ENCODE measurements at regions of chr19 and their contacts with region 1.

Region 1: GRCh38 chr19:6460101-6460853 is 685 bp upstream of the SLC25A23 start:
- DNase-seq: peak; percentile 99
- ATAC-seq: peak; percentile 83
- H3K4me3 Mint-ChIP-seq: peak overlapping the region; percentile 78
- H3K27ac Mint-ChIP-seq: peak overlapping the region; percentile 82
- H3K4me1 Mint-ChIP-seq: peaks cover 18% of the 10 kb centered on the region
- H3K27me3 Mint-ChIP-seq: no peaks in the 10 kb centered on the region

Region 2: GRCh38 chr19:6110360-6110977 is 349.8 kb before region 1 on chr19 and contains the start of gene RFX2:
- CTCF ChIA-PET with region 1: no interaction called
- POLR2A ChIA-PET with region 1: no interaction called
- intact Hi-C with region 1: loop called in 1 of 2 experiments (anchors 1 kb)
- DNase-seq: peak; percentile 100
- ATAC-seq: peak; percentile 98
- H3K4me3 Mint-ChIP-seq: peak within 1 kb of the TSS; percentile 76
- H3K27ac Mint-ChIP-seq: peak within 1 kb of the TSS; percentile 60
- H3K4me1 Mint-ChIP-seq: peaks cover 23% of the 10 kb centered on the region
- H3K27me3 Mint-ChIP-seq: peaks cover 16% of the 10 kb centered on the region
- total RNA-seq, gene RFX2: 8.6 to 8.9 TPM

Region 3: GRCh38 chr19:6362027-6362350 is 98.3 kb before region 1 on chr19:
- CTCF ChIA-PET with region 1: no interaction called
- POLR2A ChIA-PET with region 1: no interaction called
- intact Hi-C with region 1: loop called in 1 of 2 experiments (anchors 1 kb)
- DNase-seq: no peak
- ATAC-seq: peak; percentile 1
- H3K4me3 Mint-ChIP-seq: peak overlapping the region; percentile 85
- H3K27ac Mint-ChIP-seq: peak overlapping the region; percentile 91
- H3K4me1 Mint-ChIP-seq: peaks cover 16% of the 10 kb centered on the region
- H3K27me3 Mint-ChIP-seq: no peaks in the 10 kb centered on the region

Region 4: DNA sequence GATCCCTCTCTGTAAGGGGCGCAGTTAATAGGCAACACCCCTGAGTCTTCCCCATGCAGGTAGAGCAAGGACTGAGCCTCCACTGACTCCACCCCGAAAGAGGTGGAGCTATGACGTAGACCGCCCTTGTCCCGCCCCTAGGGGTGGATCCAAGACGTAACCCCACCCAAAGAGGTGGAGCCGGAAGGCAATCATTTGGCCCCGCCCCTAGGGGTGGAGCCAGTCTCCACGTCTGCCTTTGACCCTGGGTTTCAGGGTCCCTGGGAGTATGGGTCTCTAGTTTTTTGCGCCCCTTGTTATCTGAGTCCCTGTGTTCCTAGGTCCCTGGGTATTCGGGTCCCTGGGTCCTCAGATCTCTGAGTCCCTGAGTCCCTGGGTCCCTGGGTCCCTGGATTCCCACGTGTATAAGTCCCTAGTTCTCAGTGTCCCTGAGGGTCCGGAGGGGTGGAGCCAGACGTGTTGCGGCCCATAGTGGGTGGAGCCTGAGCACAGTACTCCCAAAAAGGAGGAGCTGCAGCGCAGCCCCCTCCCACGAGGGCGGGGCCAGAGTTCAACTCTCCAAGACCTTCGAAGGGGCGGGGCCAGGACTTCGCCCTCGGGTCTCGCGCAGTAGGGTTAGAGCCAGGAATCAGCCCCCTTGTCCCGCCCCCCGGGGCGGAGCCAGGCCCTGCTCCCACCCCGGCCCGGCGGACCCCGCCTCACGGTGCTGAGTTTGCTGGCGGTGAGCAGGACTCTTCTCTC is 16.0 kb after region 1 on chr19:
- CTCF ChIA-PET with region 1: no interaction called
- POLR2A ChIA-PET with region 1: no interaction called
- intact Hi-C with region 1: loop called in 1 of 2 experiments (anchors 1 kb)
- DNase-seq: peak; percentile 84
- ATAC-seq: peak; percentile 88
- H3K4me3 Mint-ChIP-seq: no peak overlapping the region
- H3K27ac Mint-ChIP-seq: no peak overlapping the region
- H3K4me1 Mint-ChIP-seq: peaks cover 16% of the 10 kb centered on the region
- H3K27me3 Mint-ChIP-seq: no peaks in the 10 kb centered on the region

Region 5: DNA sequence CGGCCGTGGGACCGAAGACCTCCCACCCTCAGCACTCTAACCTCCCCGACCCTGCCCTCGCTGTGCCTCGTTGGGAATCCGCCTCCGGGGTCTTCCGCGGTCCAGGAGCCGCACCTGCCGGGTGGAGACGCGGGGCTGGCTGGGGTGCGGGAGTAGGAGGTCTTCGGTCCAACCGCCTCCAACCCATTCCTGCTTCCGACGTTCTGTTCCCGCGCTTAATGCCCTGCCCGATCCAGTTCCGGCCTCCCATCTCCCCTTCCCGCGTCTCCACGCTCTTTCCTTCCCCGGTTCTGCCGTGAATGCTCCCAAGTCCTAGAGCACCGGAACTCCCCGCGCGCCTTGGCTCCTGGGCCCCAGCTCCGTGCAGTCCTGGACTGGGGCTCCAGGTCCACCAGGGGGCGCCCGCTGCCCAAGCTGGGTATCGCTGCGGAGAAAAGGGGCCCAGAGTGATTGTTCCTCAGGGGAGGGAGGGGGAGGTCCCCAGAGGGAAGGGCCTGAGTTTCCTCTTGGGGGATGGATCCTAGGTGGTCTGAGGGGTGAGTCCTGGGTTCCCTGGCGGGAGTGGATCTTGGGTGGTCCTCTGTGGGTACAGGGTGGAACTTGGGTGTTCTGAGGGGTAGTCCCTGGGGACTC is 56.5 kb after region 1 on chr19:
- CTCF ChIA-PET with region 1: no interaction called
- POLR2A ChIA-PET with region 1: no interaction called
- intact Hi-C with region 1: loop called in 1 of 2 experiments (anchors 1 kb)
- DNase-seq: peak; percentile 97
- ATAC-seq: peak; percentile 86
- H3K4me3 Mint-ChIP-seq: peak overlapping the region; percentile 79
- H3K27ac Mint-ChIP-seq: peak overlapping the region; percentile 92
- H3K4me1 Mint-ChIP-seq: peaks cover 34% of the 10 kb centered on the region
- H3K27me3 Mint-ChIP-seq: peaks cover 2% of the 10 kb centered on the region

Region 6: GRCh38 chr19:6674868-6675305 is 214.6 kb after region 1 on chr19:
- CTCF ChIA-PET with region 1: no interaction called
- POLR2A ChIA-PET with region 1: no interaction called
- intact Hi-C with region 1: loop called in 1 of 2 experiments (anchors 2 kb)
- DNase-seq: peak; percentile 97
- ATAC-seq: peak; percentile 61
- H3K4me3 Mint-ChIP-seq: peak overlapping the region; percentile 57
- H3K27ac Mint-ChIP-seq: peak overlapping the region; percentile 93
- H3K4me1 Mint-ChIP-seq: peaks cover 75% of the 10 kb centered on the region
- H3K27me3 Mint-ChIP-seq: no peaks in the 10 kb centered on the region

Region 7: GRCh38 chr19:6862673-6863078 is 402.4 kb after region 1 on chr19:
- CTCF ChIA-PET with region 1: no interaction called
- POLR2A ChIA-PET with region 1: no interaction called
- intact Hi-C with region 1: loop called in 1 of 2 experiments (anchors 1 kb)
- DNase-seq: peak; percentile 96
- ATAC-seq: peak; percentile 83
- H3K4me3 Mint-ChIP-seq: peak overlapping the region; percentile 72
- H3K27ac Mint-ChIP-seq: peak overlapping the region; percentile 89
- H3K4me1 Mint-ChIP-seq: peaks cover 14% of the 10 kb centered on the region
- H3K27me3 Mint-ChIP-seq: no peaks in the 10 kb centered on the region